ENCODE measurements at regions of chr17 and their contacts with region 1.

Region 1: GRCh38 chr17:38752119-38752929 is at the start of gene PSMB3:
- DNase-seq: peak; percentile 97
- H3K4me3 Mint-ChIP-seq: peak within 1 kb of the TSS; percentile 100
- H3K27ac Mint-ChIP-seq: peak within 1 kb of the TSS; percentile 99
- H3K4me1 Mint-ChIP-seq: peaks cover 31% of the 10 kb centered on the region
- H3K27me3 Mint-ChIP-seq: peaks cover 15% of the 10 kb centered on the region
- total RNA-seq, gene PSMB3: 337 and 342 TPM in 2 replicates

Region 2: GRCh38 chr17:38557836-38558727 is 194.2 kb before region 1 on chr17:
- intact Hi-C with region 1: loop called (anchors 5 kb)
- DNase-seq: peak; percentile 86
- H3K4me3 Mint-ChIP-seq: peak overlapping the region; percentile 84
- H3K27ac Mint-ChIP-seq: no peak overlapping the region
- H3K4me1 Mint-ChIP-seq: peaks cover 20% of the 10 kb centered on the region
- H3K27me3 Mint-ChIP-seq: peaks cover 51% of the 10 kb centered on the region

Region 3: DNA sequence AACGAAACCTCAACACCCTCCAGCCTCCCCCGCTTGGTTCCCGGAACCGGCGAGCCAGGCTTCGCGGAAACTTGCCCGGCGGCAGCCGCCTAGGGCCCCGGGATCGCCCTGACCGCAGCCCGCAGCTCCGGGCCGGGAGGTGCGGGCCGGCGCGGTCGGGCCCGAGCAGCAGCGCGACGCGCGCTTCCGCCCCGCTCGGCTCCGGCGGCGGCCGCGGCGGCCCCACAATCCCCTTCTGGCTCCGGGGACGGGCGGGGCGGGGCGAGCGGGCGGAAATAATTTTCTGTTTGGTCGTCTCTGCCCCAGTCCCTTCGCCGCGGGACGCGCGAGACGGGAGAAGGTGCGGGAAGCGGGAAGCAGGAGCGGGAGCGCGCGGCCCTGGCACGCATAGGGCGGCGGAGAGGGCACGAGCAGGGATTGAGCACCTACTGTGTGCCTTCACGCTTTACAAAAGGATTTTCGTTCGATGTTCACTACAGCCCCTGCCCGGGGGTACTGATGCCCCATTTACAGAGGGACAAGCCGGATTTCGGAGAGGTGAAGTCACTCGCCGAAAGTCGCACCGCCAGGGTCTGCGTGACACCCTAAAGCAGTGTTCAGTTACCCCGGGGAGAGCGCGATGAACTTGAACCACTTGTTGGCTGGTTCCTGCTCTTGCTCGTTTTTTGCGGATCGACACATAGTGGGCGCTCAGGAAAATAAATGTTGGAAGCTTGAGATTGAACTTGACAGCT is 50.0 kb before region 1 on chr17:
- intact Hi-C with region 1: loop called (anchors 1 kb)
- DNase-seq: peak; percentile 74
- H3K4me3 Mint-ChIP-seq: peak overlapping the region; percentile 96
- H3K27ac Mint-ChIP-seq: peak overlapping the region; percentile 99
- H3K4me1 Mint-ChIP-seq: peaks cover 46% of the 10 kb centered on the region
- H3K27me3 Mint-ChIP-seq: no peaks in the 10 kb centered on the region

Region 4: DNA sequence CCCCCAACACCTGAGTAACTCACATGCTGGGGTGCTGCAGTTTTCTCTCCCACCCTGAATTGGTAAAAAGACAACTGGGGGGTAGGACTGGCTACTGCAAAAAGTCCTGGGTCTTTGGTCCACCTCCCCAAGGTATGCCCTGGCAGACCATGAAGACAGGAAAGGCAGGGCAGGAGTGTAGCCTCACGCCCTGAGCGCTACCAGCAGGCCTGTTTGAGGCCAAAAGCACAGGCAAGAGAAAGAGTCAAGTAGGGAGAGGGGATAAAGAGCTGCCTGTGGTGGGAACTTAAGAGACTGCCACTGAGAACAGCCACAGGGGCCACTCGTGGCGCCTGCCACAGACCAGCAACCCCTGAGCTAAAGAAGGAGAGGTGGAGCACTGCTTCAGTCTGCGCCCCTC is 14.0 kb after region 1 on chr17:
- intact Hi-C with region 1: no loop called
- DNase-seq: no peak
- H3K4me3 Mint-ChIP-seq: no peak overlapping the region
- H3K27ac Mint-ChIP-seq: no peak overlapping the region
- H3K4me1 Mint-ChIP-seq: peaks cover 8% of the 10 kb centered on the region
- H3K27me3 Mint-ChIP-seq: no peaks in the 10 kb centered on the region

Region 5: GRCh38 chr17:38824899-38825761 is 72.8 kb after region 1 on chr17 and contains the start of gene CWC25:
- intact Hi-C with region 1: loop called (anchors 1 kb)
- DNase-seq: peak; percentile 97
- H3K4me3 Mint-ChIP-seq: peak within 1 kb of the TSS; percentile 98
- H3K27ac Mint-ChIP-seq: peak within 1 kb of the TSS; percentile 99
- H3K4me1 Mint-ChIP-seq: peaks cover 20% of the 10 kb centered on the region
- H3K27me3 Mint-ChIP-seq: no peaks in the 10 kb centered on the region
- total RNA-seq, gene CWC25: 23.0 and 26.4 TPM in 2 replicates

Region 6: GRCh38 chr17:39199820-39200069 is 447.4 kb after region 1 on chr17:
- intact Hi-C with region 1: loop called (anchors 2 kb)
- DNase-seq: peak; percentile 84
- H3K4me3 Mint-ChIP-seq: peak overlapping the region; percentile 96
- H3K27ac Mint-ChIP-seq: peak overlapping the region; percentile 98
- H3K4me1 Mint-ChIP-seq: peaks cover 42% of the 10 kb centered on the region
- H3K27me3 Mint-ChIP-seq: no peaks in the 10 kb centered on the region